B cell (primary cell): ENCODE measurements at regions of chr4 and their contacts with region 1.

Region 1: DNA sequence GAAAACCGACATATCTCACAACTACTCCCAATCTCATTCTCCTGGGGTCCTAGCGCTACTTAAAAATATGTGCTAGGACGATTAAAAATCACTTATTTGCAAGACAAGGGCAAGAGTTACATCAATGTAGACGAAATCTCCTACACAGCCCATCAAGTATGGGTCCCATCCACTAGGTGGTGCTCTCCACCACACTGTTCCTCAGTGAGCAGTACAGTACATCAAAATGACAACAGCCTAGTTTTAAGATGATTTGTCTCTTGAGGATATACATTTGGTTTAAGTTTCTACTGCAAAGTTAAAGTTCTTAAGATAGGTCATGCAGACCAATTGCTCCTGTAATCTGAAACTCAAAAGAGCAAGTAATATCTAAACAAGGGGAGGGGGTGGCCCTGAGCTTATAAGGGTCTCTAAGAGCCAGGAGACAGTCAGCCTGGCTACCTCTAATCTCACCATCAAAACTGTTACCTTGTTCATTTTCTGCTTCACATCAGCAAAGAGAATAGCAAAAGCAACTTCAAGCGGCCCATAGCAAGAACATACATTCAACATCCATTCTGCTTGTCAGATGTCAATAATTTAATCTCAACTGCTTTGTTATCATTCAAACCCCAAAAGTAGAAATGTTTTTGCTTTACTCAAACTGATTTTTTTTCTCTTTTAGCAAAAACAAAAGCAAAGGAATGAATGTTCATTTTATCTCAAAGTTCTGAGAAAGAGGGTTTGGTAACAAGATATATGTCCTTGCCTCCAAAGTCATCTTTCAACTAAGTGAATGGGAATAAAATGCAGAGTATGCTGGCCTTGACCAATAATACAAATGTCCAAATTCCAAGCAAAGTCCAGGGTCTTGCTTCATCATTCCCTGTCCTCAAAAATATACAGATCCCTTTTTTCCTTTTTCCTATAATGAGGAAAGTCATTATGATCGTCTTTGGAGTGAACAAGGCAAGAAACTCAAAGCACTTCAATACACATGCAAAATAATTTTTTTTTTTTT is 53.1 kb downstream of the STX18 start:
- DNase-seq: peak; percentile 80
- ATAC-seq: peak; percentile 81
- H3K4me3 ChIP-seq: no peak overlapping the region
- H3K4me3 Mint-ChIP-seq: no peak overlapping the region
- H3K27ac ChIP-seq: no peak overlapping the region
- H3K27ac Mint-ChIP-seq: no peak overlapping the region
- H3K4me1 ChIP-seq: peaks cover 5 to 12% of the 10 kb centered on the region in 2 donors
- H3K4me1 Mint-ChIP-seq: peaks cover 15% of the 10 kb centered on the region
- H3K27me3 ChIP-seq: no peaks in the 10 kb centered on the region
- H3K27me3 Mint-ChIP-seq: no peaks in the 10 kb centered on the region
- CTCF ChIP-seq: peak; percentile 97

Region 2: DNA sequence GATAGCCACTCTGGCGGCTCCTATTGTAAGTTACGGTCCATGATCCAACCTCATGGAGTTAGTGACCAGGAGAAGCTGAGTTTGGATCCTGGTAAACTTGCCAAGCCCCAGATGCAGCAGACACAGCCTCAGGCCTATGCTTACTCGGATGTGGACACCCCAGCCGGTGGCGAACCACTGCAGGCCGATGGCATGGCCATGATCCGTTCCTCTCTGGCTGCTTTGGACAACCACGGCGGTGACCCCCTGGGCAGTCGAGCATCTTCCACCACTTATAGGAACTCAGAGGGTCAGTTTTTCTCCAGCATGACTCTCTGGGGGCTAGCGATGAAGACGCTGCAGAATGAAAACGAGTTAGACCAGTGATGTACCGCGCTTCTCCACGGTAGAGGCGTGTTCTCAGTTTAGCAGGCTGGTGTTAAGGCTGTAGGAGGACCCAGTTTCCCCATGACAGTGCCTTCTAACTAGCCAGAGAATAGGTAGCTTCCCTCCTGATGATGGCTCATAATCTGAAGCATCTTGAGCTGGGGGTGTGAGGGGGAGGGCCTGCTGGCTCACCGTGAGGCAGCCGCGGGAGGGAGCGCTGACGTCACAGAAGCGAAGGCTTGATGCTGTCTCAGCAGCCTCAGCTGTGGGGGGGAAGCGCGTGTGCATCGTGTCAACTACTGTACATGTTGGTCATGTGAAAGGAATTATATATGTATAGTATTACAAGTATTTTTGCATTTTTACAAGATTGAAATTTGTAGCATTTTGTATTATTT is 167.6 kb before region 1 on chr4:
- CTCF ChIA-PET with region 1: no interaction called
- POLR2A ChIA-PET with region 1: no interaction called
- intact Hi-C with region 1: no loop called
- DNase-seq: no peak
- ATAC-seq: no peak
- H3K4me3 ChIP-seq: no peak overlapping the region
- H3K4me3 Mint-ChIP-seq: no peak overlapping the region
- H3K27ac ChIP-seq: no peak overlapping the region
- H3K27ac Mint-ChIP-seq: no peak overlapping the region
- H3K4me1 ChIP-seq: no peaks in the 10 kb centered on the region
- H3K4me1 Mint-ChIP-seq: no peaks in the 10 kb centered on the region
- H3K27me3 ChIP-seq: no peaks in the 10 kb centered on the region
- H3K27me3 Mint-ChIP-seq: no peaks in the 10 kb centered on the region
- CTCF ChIP-seq: no peak

Region 3: DNA sequence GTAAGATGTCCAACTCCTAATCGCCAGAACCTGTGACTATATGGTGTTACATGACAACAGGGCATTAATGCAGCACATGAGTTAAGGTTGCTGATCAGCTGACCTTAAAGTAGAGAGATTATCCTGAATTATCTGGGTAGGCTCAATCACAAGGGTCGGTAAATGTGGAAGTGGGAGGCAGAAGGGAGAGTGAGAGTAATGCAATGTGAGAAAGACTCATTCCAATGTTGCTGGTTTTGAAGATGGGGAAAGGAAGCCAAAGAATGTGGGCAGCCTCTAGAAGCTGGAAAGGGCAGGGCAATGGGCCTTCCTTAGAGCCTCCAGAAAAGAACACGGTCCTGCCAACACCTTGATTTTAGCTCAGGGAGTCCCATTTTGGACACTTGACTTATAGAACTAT is 14.2 kb before region 1 on chr4:
- CTCF ChIA-PET with region 1: interaction called, 11 read pairs
- POLR2A ChIA-PET with region 1: no interaction called
- intact Hi-C with region 1: no loop called
- DNase-seq: no peak
- ATAC-seq: no peak
- H3K4me3 ChIP-seq: no peak overlapping the region
- H3K4me3 Mint-ChIP-seq: no peak overlapping the region
- H3K27ac ChIP-seq: no peak overlapping the region
- H3K27ac Mint-ChIP-seq: no peak overlapping the region
- H3K4me1 ChIP-seq: no peaks in the 10 kb centered on the region
- H3K4me1 Mint-ChIP-seq: no peaks in the 10 kb centered on the region
- H3K27me3 ChIP-seq: no peaks in the 10 kb centered on the region
- H3K27me3 Mint-ChIP-seq: no peaks in the 10 kb centered on the region
- CTCF ChIP-seq: no peak

Region 4: GRCh38 chr4:4575273-4576211 is 86.8 kb after region 1 on chr4:
- CTCF ChIA-PET with region 1: interaction called, 7 read pairs
- POLR2A ChIA-PET with region 1: no interaction called
- intact Hi-C with region 1: loop called (anchors 1 kb)
- DNase-seq: peak; percentile 81
- ATAC-seq: peak; percentile 83
- H3K4me3 ChIP-seq: peak overlapping the region; percentile 46 to 76 (median 65)
- H3K4me3 Mint-ChIP-seq: peak overlapping the region; percentile 85
- H3K27ac ChIP-seq: peak overlapping the region; percentile 37 to 72
- H3K27ac Mint-ChIP-seq: peak overlapping the region; percentile 81
- H3K4me1 ChIP-seq: peaks cover 11 to 12% of the 10 kb centered on the region in 2 donors
- H3K4me1 Mint-ChIP-seq: peaks cover 16% of the 10 kb centered on the region
- H3K27me3 ChIP-seq: no peaks in the 10 kb centered on the region
- H3K27me3 Mint-ChIP-seq: no peaks in the 10 kb centered on the region
- CTCF ChIP-seq: peak; percentile 56

Region 5: DNA sequence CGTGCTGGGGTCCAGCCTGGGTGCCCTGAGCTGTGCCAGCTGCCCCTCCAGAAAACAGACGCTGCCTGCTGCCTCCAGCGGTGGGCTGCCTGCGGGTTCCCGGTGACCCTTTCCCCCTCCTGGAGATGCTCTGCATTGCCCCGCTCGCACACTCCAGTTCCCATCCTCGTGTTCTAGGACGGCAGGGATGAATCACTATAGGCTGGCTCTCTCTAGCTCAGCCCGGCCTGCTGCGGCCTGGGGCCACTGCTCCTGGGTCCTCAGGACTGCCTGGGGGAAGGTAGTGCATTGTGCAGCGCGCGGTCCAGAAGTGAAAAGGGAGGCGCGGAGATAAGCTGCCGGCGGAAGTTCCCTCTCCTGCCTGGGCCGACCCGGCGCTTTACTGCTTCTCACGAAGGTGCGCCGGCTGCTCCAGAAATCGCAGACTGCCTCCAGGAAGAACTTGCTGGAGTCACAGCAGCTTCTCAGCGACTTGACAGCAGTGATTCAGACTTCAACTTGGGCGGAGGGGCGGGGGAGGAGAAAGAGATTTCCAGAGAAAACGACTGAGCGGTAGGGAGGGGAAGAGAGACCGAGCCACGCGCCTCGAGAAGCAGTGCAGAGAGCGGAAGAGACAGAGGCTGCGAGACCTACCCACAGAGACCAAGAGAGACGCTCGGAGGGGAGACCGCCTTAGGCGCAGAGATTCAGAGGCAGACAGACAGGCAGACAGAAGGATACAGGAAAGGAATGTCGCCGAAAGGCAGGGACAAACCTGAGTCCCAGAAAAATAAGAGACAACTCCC is 364.1 kb after region 1 on chr4:
- CTCF ChIA-PET with region 1: no interaction called
- POLR2A ChIA-PET with region 1: no interaction called
- intact Hi-C with region 1: loop called (anchors 2 kb)
- DNase-seq: peak; percentile 69
- ATAC-seq: peak; percentile 65
- H3K4me3 ChIP-seq: peak overlapping the region in 4 of 5 experiments; percentile 43 to 59 (median 52)
- H3K4me3 Mint-ChIP-seq: peak overlapping the region; percentile 88
- H3K27ac ChIP-seq: no peak overlapping the region
- H3K27ac Mint-ChIP-seq: peak overlapping the region; percentile 27
- H3K4me1 ChIP-seq: peaks cover 34 to 44% of the 10 kb centered on the region in 2 donors
- H3K4me1 Mint-ChIP-seq: peaks cover 28% of the 10 kb centered on the region
- H3K27me3 ChIP-seq: peaks cover 0 to 87% (median 52%) of the 10 kb centered on the region in 4 experiments
- H3K27me3 Mint-ChIP-seq: peaks cover 53% of the 10 kb centered on the region
- CTCF ChIP-seq: no peak

Region 6: GRCh38 chr4:5142726-5143125 is 654.0 kb after region 1 on chr4:
- CTCF ChIA-PET with region 1: no interaction called
- POLR2A ChIA-PET with region 1: no interaction called
- intact Hi-C with region 1: loop called (anchors 2 kb)
- DNase-seq: peak; percentile 9
- ATAC-seq: no peak
- H3K4me3 ChIP-seq: no peak overlapping the region
- H3K4me3 Mint-ChIP-seq: no peak overlapping the region
- H3K27ac ChIP-seq: no peak overlapping the region
- H3K27ac Mint-ChIP-seq: no peak overlapping the region
- H3K4me1 ChIP-seq: no peaks in the 10 kb centered on the region
- H3K4me1 Mint-ChIP-seq: no peaks in the 10 kb centered on the region
- H3K27me3 ChIP-seq: no peaks in the 10 kb centered on the region
- H3K27me3 Mint-ChIP-seq: no peaks in the 10 kb centered on the region
- CTCF ChIP-seq: no peak

Region 7: GRCh38 chr4:5812506-5813229 is 1324.0 kb after region 1 on chr4:
- CTCF ChIA-PET with region 1: interaction called, 21 read pairs
- POLR2A ChIA-PET with region 1: no interaction called
- intact Hi-C with region 1: no loop called
- DNase-seq: peak; percentile 58
- ATAC-seq: peak; percentile 51
- H3K4me3 ChIP-seq: no peak overlapping the region
- H3K4me3 Mint-ChIP-seq: no peak overlapping the region
- H3K27ac ChIP-seq: no peak overlapping the region
- H3K27ac Mint-ChIP-seq: no peak overlapping the region
- H3K4me1 ChIP-seq: no peaks in the 10 kb centered on the region
- H3K4me1 Mint-ChIP-seq: no peaks in the 10 kb centered on the region
- H3K27me3 ChIP-seq: no peaks in the 10 kb centered on the region
- H3K27me3 Mint-ChIP-seq: no peaks in the 10 kb centered on the region
- CTCF ChIP-seq: peak; percentile 66